ENCODE measurements at regions of chr17 and their contacts with region 1.

Region 1: DNA sequence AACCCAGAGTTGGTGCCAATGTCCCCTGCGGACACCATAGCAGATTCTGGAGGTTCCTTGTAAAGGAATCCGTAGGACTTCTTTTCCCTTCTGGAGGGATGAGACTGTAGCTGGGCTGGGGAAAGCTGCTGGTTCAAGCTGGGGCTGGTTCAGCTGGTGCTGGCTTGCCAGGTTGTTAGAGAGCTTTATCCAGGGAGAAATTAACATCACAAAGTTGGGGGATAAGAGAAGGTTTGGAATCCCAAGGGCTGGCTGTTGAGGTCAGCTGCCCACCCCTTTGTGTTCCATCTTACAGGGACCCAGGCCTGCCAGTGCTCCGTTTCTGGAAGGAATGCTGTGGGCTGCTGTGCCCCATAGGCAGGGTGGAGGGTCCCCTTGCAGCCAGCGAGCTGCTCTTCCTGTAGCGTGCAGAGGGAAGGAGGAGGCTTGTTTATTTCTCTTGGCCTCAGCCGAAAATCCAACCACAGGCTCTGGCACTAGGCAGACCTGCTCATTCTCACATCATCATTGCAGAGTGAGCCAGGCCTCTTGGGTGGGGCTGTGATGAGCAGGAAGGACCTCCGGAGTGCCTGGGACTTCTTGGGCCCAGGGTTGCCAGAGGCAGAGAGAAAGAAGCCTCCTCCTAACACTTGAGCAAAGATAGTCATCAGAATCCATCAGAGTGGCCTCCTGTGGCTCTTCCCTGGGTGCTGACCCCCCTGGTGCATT is 251.1 kb downstream of the SEC14L1 start:
- DNase-seq: peak; percentile 57
- H3K4me3 ChIP-seq: no peak overlapping the region
- H3K27ac ChIP-seq: no peak overlapping the region
- H3K4me1 ChIP-seq: peaks cover 47% of the 10 kb centered on the region
- H3K27me3 ChIP-seq: no peaks in the 10 kb centered on the region
- CTCF ChIP-seq: no peak
- POLR2A ChIP-seq: peak; percentile 42

Region 2: DNA sequence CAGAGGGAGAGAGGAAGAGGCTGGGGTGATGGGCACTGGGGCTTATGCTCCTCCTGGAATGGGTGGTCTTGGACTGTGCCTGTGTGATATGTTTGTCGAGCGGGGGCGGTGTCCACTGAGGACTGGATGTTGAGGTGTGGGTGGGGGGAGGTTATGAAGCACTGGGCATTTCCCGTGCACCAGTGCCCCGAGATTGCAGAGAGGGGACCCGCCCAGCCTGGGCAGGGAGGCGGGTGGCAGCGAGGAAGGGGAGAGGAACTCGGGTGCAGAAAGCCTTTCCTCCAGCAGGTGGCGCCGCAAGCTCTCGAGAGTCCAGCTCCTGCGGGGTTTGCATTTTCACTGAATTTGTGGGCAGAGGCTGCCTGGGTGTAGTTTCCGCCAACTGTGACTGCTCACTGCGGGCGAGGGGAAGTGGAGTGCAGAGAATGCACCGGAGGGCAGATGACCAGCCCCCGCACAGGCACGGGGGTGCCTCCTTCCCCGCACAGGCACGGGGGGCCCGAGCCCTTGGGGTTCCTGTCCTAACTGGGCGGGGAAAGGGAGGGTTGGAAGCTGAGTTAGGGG is 60.4 kb before region 1 on chr17:
- CTCF ChIA-PET with region 1: interaction called, 13 read pairs
- POLR2A ChIA-PET with region 1: no interaction called
- dilution Hi-C with region 1: no loop called
- intact Hi-C with region 1: loop called (anchors 1 kb)
- DNase-seq: peak; percentile 78
- H3K4me3 ChIP-seq: peak overlapping the region in 1 of 3 experiments; percentile 14
- H3K27ac ChIP-seq: no peak overlapping the region
- H3K4me1 ChIP-seq: peaks cover 5% of the 10 kb centered on the region
- H3K27me3 ChIP-seq: no peaks in the 10 kb centered on the region
- CTCF ChIP-seq: peak; percentile 85 to 95
- POLR2A ChIP-seq: no peak

Region 3: DNA sequence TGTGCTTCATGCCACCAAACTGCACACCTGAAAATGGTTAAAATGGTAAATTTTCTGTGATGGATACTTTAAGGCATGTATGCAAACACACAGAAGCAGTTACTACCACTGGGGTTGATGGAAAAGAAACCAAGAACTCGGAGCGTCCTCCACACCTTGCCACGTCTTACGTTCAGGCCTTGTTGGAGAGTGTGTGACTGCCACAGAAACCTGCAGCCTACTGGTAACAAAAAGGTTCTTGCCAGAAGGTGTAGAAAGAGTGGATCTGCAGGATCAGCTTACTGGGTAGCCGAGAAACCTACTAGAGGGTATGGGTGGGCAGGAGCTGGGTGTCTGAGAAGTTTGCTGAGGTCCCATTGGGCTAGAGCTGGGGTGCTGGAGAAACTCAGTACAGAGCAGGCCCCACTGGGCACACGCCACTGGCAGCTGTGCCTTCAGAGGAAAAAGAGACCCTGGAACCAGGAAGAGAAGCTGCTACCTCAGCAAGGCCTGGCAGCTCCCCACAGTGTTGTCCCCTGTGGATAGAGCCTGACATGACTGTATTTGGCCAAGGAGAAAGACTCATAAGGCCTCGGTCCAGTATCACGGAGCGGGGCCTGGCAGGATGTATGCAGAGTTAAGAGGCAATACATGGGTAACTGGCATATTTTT is 46.4 kb before region 1 on chr17:
- CTCF ChIA-PET with region 1: no interaction called
- POLR2A ChIA-PET with region 1: no interaction called
- dilution Hi-C with region 1: no loop called
- intact Hi-C with region 1: loop called (anchors 2 kb)
- DNase-seq: no peak
- H3K4me3 ChIP-seq: no peak overlapping the region
- H3K27ac ChIP-seq: no peak overlapping the region
- H3K4me1 ChIP-seq: peaks cover 15% of the 10 kb centered on the region
- H3K27me3 ChIP-seq: peaks cover 2 to 9% of the 10 kb centered on the region in 2 experiments
- CTCF ChIP-seq: no peak
- POLR2A ChIP-seq: no peak

Region 4: DNA sequence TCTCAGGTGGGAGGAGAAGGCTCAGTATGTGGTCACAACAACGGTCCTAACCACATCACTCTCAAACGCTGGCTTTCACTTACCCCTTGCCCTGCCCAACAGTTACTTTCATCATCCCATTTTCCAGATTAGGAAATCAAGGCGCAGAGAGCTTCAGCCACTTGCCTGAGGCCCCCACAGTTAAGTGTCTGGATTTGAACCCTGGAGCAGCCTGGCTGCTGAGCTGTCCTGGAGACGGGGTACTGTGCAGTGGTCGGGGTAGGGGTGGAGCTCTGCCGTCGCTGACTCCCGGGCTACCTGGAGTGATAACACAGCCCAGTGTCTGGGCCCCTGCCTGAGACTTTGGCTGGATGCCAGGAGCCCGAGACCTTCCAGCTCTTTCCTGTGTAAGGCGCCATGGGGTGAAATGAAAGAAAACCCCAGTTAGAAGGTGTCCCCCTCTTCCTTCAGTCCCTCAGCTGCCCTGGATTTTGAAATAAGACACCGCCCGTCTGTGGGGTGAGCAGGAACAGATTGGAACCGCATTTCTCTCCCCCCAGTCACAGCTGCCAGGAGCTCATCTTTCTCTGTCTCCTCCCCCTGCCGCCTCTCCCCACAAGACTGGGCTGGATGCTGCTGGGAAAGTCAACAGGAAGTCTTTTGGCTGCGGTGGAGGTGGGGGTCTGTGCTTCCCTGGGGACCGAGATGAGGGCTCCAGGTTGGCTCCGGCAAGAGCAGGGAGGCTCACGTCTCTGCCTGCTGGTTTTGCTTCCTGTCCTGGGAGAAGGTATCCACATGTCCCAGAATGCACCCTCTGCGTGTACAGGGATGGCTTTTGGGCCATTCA is 29.2 kb after region 1 on chr17:
- CTCF ChIA-PET with region 1: interaction called, 8 read pairs
- POLR2A ChIA-PET with region 1: no interaction called
- dilution Hi-C with region 1: no loop called
- intact Hi-C with region 1: loop called (anchors 2 kb)
- DNase-seq: peak; percentile 42
- H3K4me3 ChIP-seq: no peak overlapping the region
- H3K27ac ChIP-seq: no peak overlapping the region
- H3K4me1 ChIP-seq: peaks cover 35% of the 10 kb centered on the region
- H3K27me3 ChIP-seq: no peaks in the 10 kb centered on the region
- CTCF ChIP-seq: no peak
- POLR2A ChIP-seq: no peak

Measured in endothelial cell of umbilical vein (primary cell).